Ascending aorta (tissue), 2 donors: ENCODE measurements at regions of chr1 and their contacts with region 1.

Region 1: GRCh38 chr1:8348777-8349491 is 31.0 kb downstream of the SLC45A1 start:
- DNase-seq: peak in 1 of 2 donors; percentile 84
- H3K4me3 ChIP-seq: no peak overlapping the region
- H3K27ac ChIP-seq: peak overlapping the region in 1 of 2 donors; percentile 81
- H3K4me1 ChIP-seq: peaks cover under 1 to 28% of the 10 kb centered on the region in 2 donors
- H3K27me3 ChIP-seq: no peaks in the 10 kb centered on the region
- CTCF ChIP-seq: peak; percentile 83 to 95 (median 93)

Region 2: GRCh38 chr1:7975212-7975865 is 373.6 kb before region 1 on chr1:
- intact Hi-C with region 1: loop called (anchors 2 kb)
- DNase-seq: peak in 1 of 2 donors; percentile 78
- H3K4me3 ChIP-seq: no peak overlapping the region
- H3K27ac ChIP-seq: no peak overlapping the region
- H3K4me1 ChIP-seq: peaks cover 0 to 10% of the 10 kb centered on the region in 2 donors
- H3K27me3 ChIP-seq: no peaks in the 10 kb centered on the region
- CTCF ChIP-seq: peak; percentile 85 to 87 (median 85)

Region 3: GRCh38 chr1:7983086-7983778 is 365.7 kb before region 1 on chr1:
- intact Hi-C with region 1: loop called (anchors 1 kb)
- DNase-seq: no peak
- H3K4me3 ChIP-seq: no peak overlapping the region
- H3K27ac ChIP-seq: no peak overlapping the region
- H3K4me1 ChIP-seq: peaks cover 0 to 2% of the 10 kb centered on the region in 2 donors
- H3K27me3 ChIP-seq: no peaks in the 10 kb centered on the region
- CTCF ChIP-seq: no peak

Region 4: GRCh38 chr1:8314346-8315280 is 34.3 kb before region 1 on chr1:
- intact Hi-C with region 1: loop called (anchors 2 kb)
- DNase-seq: peak in 1 of 2 donors; percentile 83
- H3K4me3 ChIP-seq: no peak overlapping the region
- H3K27ac ChIP-seq: no peak overlapping the region
- H3K4me1 ChIP-seq: peaks cover 0 to 14% of the 10 kb centered on the region in 2 donors
- H3K27me3 ChIP-seq: no peaks in the 10 kb centered on the region
- CTCF ChIP-seq: peak; percentile 84 to 92 (median 87)

Region 5: DNA sequence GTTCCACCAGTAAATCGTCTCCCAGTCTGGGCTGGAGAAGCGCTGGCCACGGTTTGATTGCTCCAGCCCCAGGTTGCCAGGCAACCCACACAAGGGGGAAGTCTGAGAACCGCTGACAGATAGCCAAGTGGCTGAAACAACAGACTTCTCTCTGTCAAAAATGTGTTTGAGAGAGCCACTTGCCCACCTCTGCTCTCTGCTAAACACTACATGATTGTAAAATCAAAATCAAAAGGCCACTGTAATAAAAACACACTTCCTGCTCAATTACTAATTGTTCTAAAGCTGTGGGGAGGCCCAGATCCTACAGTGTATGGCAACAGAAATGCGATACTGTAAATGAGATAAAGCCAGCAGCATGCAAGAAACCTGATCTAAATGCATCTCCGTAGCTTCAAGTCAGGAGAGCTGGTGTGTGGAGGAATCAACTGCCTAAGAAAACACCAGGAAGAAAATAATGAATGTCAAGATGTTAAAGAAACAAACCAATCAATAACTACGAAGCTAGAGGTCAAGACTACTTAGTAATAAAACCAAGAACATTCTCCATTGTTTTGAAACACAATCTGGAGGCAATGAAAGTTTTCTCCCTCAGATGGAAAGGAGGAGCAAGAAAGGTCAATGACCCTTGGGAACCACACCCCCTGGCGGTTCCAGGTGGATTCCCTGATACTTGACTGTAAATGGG is 90.2 kb after region 1 on chr1:
- intact Hi-C with region 1: no loop called
- DNase-seq: peak; percentile 46 to 91
- H3K4me3 ChIP-seq: no peak overlapping the region
- H3K27ac ChIP-seq: peak overlapping the region; percentile 58
- H3K4me1 ChIP-seq: peaks cover 0 to 15% of the 10 kb centered on the region in 2 donors
- H3K27me3 ChIP-seq: no peaks in the 10 kb centered on the region
- CTCF ChIP-seq: no peak